Prostate gland (tissue), 2 donors: ENCODE measurements at regions of chr4 and their contacts with region 1.

Region 1: DNA sequence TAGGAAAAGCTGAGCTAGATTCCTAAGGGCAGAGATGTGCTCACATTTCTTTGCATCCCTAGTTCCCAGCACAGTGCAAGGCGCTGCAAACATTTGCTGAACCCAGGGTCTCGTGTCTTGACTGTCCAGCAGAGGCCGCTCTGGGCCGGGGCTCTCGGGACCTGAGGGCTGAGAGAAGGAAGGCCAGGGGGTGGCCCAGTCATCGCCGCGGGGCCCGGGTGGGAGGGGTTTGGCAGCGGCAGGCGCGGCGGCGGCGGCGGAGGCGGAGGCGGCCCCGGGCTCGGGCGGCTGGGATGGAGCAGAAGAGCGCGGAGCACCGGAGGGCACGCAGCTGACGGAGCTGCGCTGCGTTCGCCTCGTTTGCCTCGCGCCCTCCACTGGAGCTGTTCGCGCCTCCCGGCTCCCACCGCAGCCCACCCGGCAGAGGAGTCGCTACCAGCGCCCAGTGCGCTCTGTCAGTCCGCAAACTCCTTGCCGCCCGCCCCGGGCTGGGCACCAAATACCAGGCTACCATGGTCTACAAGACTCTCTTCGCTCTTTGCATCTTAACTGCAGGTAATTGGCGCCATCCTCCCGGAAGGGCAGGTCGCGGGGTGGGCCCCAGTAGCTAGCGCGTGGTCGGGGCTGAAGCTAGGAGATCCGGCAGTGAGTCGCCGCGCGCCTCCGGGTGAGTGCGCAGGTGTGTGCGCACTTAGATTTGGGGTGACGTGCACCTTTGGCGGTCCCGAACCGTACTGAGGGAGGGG is at the start of gene PARM1:
- DNase-seq: peak; percentile 95
- H3K4me3 ChIP-seq: peak within 1 kb of the TSS; percentile 86 to 91
- H3K27ac ChIP-seq: peak within 1 kb of the TSS; percentile 94
- H3K4me1 ChIP-seq: no peaks in the 10 kb centered on the region
- H3K27me3 ChIP-seq: no peaks in the 10 kb centered on the region
- CTCF ChIP-seq: peak; percentile 86 to 97 (median 90)
- POLR2A ChIP-seq: peak; percentile 91
- total RNA-seq, gene PARM1: 105 to 133 TPM

Region 2: DNA sequence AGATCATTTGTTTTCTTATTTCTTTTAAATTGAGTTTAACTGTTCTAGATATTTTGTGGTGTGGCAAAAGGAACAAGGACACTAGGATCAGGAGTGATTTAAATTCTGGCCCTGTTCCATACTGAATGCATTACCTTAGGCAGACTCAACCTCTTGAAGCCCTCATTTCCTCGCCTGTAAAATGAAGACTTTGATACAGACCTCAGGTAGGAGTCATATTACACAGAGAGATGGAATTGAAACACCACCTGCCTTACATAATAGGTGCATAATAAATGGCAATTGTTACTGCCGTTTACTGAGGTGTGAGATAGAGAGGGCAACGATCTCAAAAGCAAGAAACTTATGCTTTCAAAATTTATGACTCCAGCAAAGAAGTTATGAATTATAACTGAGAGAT is 1284.5 kb before region 1 on chr4:
- intact Hi-C with region 1: no loop called
- DNase-seq: no peak
- H3K4me3 ChIP-seq: no peak overlapping the region
- H3K27ac ChIP-seq: no peak overlapping the region
- H3K4me1 ChIP-seq: no peaks in the 10 kb centered on the region
- H3K27me3 ChIP-seq: no peaks in the 10 kb centered on the region
- CTCF ChIP-seq: no peak
- POLR2A ChIP-seq: no peak

Region 3: GRCh38 chr4:74659576-74660411 is 273.2 kb before region 1 on chr4:
- intact Hi-C with region 1: no loop called
- DNase-seq: peak; percentile 5
- H3K4me3 ChIP-seq: no peak overlapping the region
- H3K27ac ChIP-seq: no peak overlapping the region
- H3K4me1 ChIP-seq: no peaks in the 10 kb centered on the region
- H3K27me3 ChIP-seq: no peaks in the 10 kb centered on the region
- CTCF ChIP-seq: no peak
- POLR2A ChIP-seq: no peak

Region 4: DNA sequence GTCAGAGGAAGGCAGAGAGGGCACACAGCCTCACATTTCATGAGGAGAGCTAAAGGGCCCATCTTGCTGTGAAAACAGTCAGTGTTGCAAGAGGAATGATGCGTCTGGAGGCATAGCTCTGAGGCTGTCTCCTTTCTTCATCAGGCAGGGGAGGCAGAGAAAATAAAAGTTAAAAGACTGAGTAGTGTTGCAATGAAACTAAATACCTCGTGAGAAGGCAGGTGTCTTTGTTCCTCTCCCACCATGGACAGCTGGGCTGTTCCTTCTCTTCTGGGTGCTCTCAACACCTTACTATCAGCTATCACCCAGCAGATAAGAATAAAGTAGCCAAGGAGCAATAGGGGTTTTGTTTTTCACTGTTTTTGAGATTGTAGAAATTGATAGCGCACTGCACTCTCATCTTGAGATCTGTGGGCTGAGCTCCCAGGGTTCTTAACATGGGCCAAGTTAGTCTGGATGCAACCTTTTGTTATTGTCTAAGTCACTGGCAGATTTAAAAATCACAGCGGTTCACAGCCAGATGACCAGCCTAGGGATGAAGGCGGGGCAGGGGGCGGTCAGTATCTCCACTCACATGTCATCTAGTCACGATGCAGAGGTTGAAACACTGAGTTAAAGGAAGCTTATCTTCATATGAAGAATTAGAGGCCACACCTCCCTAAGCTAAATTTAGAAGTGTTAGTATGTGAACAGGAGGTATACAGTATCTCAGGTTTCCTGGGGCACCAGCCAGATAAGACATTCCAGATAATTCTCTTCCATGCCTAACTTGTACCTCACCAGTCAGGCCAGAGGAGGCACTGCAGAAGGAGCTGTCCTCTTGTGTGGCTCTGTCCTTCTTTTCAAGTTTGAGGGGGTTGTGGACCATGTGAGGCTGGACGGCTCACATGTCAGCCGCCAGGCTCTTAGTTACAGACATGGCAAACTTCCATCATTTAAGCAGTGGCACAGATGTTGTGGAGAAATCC is 36.8 kb after region 1 on chr4:
- intact Hi-C with region 1: no loop called
- DNase-seq: no peak
- H3K4me3 ChIP-seq: no peak overlapping the region
- H3K27ac ChIP-seq: peak overlapping the region in 1 of 2 donors; percentile 39
- H3K4me1 ChIP-seq: peaks cover 3% of the 10 kb centered on the region
- H3K27me3 ChIP-seq: no peaks in the 10 kb centered on the region
- CTCF ChIP-seq: peak in 2 of 4 experiments; percentile 27 to 35
- POLR2A ChIP-seq: no peak

Region 5: DNA sequence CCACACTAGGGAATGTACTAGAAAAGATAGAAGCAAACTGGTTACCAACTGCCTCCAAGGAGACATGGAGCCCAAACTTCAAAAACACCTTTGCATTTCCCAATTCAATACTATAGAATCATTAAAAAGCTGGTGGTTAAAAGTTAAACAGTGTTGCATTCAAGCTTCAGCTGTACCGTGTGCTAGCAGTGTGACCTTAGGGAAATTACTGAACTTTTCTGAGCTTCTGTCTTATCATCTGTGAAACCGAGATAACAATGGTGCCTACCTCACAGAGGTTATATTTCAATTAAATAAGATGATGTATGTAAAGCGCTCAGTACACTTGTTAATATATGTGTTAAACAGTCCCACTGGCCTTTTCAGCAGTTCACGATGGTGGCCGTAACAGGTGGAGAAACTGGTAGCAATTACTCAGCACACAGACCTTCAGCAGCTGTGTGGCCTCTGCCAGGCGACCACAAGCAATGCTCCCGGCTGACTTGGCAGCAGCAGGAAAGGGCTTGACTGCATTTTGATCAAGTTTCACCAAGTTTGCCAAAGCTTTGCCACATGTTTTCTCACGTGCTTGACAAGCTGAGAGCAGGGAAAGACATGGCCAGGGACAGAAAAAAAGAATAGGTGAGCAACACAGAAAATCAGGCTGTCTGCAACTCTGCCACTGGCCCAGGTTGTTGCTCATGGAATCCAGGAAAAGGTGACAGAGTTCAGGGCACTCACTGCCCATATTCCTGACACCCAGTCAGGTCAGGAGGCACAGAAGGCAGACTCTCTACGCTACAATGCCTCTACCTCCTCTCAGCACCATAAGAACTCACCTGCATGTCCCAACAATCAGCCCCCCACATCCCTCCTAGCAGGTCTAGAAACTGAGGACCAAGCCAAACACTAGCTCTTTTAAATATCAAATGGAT is 72.0 kb after region 1 on chr4:
- intact Hi-C with region 1: loop called (anchors 10 kb)
- DNase-seq: peak; percentile 70
- H3K4me3 ChIP-seq: no peak overlapping the region
- H3K27ac ChIP-seq: no peak overlapping the region
- H3K4me1 ChIP-seq: no peaks in the 10 kb centered on the region
- H3K27me3 ChIP-seq: no peaks in the 10 kb centered on the region
- CTCF ChIP-seq: no peak
- POLR2A ChIP-seq: no peak

Region 6: GRCh38 chr4:75229806-75230570 is 297.0 kb after region 1 on chr4:
- intact Hi-C with region 1: loop called (anchors 5 kb)
- DNase-seq: no peak
- H3K4me3 ChIP-seq: no peak overlapping the region
- H3K27ac ChIP-seq: no peak overlapping the region
- H3K4me1 ChIP-seq: no peaks in the 10 kb centered on the region
- H3K27me3 ChIP-seq: no peaks in the 10 kb centered on the region
- CTCF ChIP-seq: no peak
- POLR2A ChIP-seq: no peak

Region 7: GRCh38 chr4:75469896-75470295 is 536.9 kb after region 1 on chr4:
- intact Hi-C with region 1: loop called (anchors 2 kb)
- DNase-seq: no peak
- H3K4me3 ChIP-seq: no peak overlapping the region
- H3K27ac ChIP-seq: no peak overlapping the region
- H3K4me1 ChIP-seq: no peaks in the 10 kb centered on the region
- H3K27me3 ChIP-seq: no peaks in the 10 kb centered on the region
- CTCF ChIP-seq: no peak
- POLR2A ChIP-seq: no peak

Region 8: GRCh38 chr4:75514131-75514948 is 581.4 kb after region 1 on chr4 and contains the starts of genes RCHY1 and THAP6:
- intact Hi-C with region 1: loop called (anchors 1 kb)
- DNase-seq: peak; percentile 95
- H3K4me3 ChIP-seq: peak within 1 kb of the TSS; percentile 70 to 75
- H3K27ac ChIP-seq: peak within 1 kb of the TSS; percentile 97 to 98
- H3K4me1 ChIP-seq: no peaks in the 10 kb centered on the region
- H3K27me3 ChIP-seq: no peaks in the 10 kb centered on the region
- CTCF ChIP-seq: peak in 2 of 4 experiments; percentile 26 to 41
- POLR2A ChIP-seq: peak; percentile 74
- total RNA-seq, gene RCHY1: 18.7 to 23.3 TPM
- total RNA-seq, gene THAP6: 20.7 to 24.1 TPM